CD8-positive, alpha-beta T cell (primary cell): ENCODE measurements at regions of chr5 and their contacts with region 1.

Region 1: GRCh38 chr5:39117401-39117800 is 43.2 kb upstream of the RICTOR start:
- DNase-seq: no peak
- ATAC-seq: no peak
- H3K4me3 ChIP-seq: no peak overlapping the region
- H3K4me3 Mint-ChIP-seq: no peak overlapping the region
- H3K27ac ChIP-seq: no peak overlapping the region
- H3K27ac Mint-ChIP-seq: peak overlapping the region; percentile 90
- H3K4me1 ChIP-seq: no peaks in the 10 kb centered on the region
- H3K4me1 Mint-ChIP-seq: peaks cover 21% of the 10 kb centered on the region
- H3K27me3 ChIP-seq: no peaks in the 10 kb centered on the region
- H3K27me3 Mint-ChIP-seq: no peaks in the 10 kb centered on the region
- CTCF ChIP-seq: no peak

Region 2: GRCh38 chr5:38961691-38962090 is 155.7 kb before region 1 on chr5:
- CTCF ChIA-PET with region 1: no interaction called
- POLR2A ChIA-PET with region 1: no interaction called
- intact Hi-C with region 1: loop called (anchors 5 kb)
- DNase-seq: no peak
- ATAC-seq: no peak
- H3K4me3 ChIP-seq: no peak overlapping the region
- H3K4me3 Mint-ChIP-seq: no peak overlapping the region
- H3K27ac ChIP-seq: no peak overlapping the region
- H3K27ac Mint-ChIP-seq: no peak overlapping the region
- H3K4me1 ChIP-seq: no peaks in the 10 kb centered on the region
- H3K4me1 Mint-ChIP-seq: no peaks in the 10 kb centered on the region
- H3K27me3 ChIP-seq: no peaks in the 10 kb centered on the region
- H3K27me3 Mint-ChIP-seq: no peaks in the 10 kb centered on the region
- CTCF ChIP-seq: no peak

Region 3: DNA sequence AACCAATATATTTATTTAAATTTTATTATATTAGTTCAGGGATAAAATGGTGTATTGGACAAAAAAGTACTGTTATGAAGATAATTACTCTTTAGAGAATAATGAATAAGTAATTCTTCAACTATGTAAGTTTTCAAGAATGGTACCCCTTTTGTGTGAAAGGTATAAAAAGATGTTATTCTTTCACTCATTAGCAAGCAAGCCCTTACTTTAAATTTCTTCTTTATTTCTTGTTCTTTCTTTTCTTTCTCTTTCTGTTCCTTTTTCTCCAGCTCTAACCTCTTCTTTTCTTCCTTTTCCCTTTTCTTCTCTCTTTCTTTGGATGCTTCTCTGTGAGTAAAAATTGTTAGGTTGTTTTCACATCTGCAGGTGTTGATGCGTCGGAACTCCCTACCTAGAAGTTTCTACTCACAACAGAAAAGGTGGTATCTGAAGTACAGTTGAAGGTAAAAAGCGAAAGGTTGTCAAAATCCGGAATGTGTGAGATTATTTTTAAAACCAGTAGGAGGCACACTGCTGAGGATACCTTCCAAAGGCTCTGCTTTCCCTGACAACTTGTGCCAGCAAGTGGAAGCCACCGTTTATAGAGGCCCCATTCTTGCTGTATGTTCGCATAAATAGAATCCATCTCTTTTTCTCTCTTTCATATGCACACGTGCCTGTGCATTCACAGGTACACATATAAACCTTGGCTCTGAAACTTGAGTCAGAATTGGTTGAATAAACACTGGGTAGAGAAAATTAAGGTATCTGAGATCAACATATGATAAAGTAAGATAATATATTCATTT is 20.2 kb after region 1 on chr5:
- CTCF ChIA-PET with region 1: interaction called, 3 read pairs
- POLR2A ChIA-PET with region 1: no interaction called
- intact Hi-C with region 1: loop called in 1 of 2 experiments (anchors 2 kb)
- DNase-seq: peak in 2 of 9 experiments; percentile 15 to 39
- ATAC-seq: peak; percentile 34
- H3K4me3 ChIP-seq: no peak overlapping the region
- H3K4me3 Mint-ChIP-seq: no peak overlapping the region
- H3K27ac ChIP-seq: peak overlapping the region in 1 of 2 experiments; percentile 0
- H3K27ac Mint-ChIP-seq: peak overlapping the region; percentile 82
- H3K4me1 ChIP-seq: peaks cover 5% of the 10 kb centered on the region
- H3K4me1 Mint-ChIP-seq: peaks cover 37% of the 10 kb centered on the region
- H3K27me3 ChIP-seq: no peaks in the 10 kb centered on the region
- H3K27me3 Mint-ChIP-seq: no peaks in the 10 kb centered on the region
- CTCF ChIP-seq: no peak